A549 (cell line): ENCODE measurements at regions of chr9 and their contacts with region 1.

Region 1: DNA sequence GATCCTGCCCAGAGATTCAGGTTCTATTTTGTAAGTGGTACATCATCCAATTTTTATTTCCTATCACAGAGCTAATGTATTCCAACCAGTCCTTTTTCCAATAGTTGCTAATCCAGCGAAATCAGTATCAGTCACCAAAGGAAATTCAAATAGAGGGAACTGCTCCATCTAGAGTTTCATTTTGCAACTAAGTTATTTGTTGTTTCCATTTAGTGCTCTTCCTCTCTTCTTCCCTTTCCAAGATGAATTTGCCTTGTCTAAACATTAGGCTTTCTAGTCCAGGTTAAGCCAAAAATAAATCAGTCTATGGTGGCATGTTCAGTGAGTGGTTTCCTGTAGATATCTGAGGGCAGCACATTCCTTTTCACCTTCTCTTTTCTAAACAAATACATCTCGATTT is 79.8 kb upstream of the SPATA31D4 start:
- DNase-seq: no peak
- ATAC-seq: peak; percentile 51 to 74; a peak in 4 of 6 replicates
- H3K4me3 ChIP-seq: no peak overlapping the region
- H3K27ac ChIP-seq: peak overlapping the region in 1 of 2 experiments; percentile 42; a peak in 1 of 6 replicates
- H3K4me1 ChIP-seq: peaks cover 20% of the 10 kb centered on the region
- CTCF ChIP-seq: peak; percentile 69
- EP300 ChIP-seq: no peak
- POLR2A ChIP-seq: no peak
- RAD21 ChIP-seq: peak; percentile 68 to 74

Region 2: DNA sequence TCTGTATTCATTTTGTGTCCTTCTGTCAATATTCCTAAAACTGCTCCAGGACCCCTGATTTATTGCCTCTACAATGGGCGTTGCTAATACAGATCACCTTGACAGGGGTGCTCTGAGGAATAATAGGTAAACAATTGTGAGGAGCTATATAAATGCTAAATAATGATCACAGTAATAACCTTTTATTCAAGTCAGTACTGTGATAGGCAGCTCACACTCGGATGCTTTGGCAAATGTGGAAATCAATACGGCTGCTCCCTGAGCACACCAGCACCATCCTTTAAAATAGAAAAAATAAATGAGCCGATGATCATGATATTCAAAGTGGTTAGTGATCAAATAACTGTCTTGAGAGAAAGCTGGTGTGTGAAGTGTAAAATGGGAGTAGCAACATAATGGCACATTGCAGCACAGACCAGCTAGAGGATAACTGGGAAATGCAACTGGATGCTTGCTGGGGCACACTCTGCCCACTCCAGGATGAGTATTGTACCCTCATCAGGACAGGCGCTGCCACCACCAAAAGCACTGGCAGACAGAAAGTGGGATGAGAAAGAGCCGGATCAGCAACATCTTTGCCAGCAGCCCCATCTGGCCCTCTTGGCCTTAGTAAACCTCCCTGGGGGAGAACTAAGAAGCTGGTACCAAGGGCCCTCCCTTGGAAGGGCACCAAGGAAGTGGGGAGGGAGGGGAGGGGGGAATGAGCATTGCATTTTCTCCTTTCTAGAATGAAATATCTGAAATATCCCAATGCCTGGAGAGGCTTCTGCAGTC is 10.4 kb after region 1 on chr9:
- CTCF ChIA-PET with region 1: interaction called, 22 read pairs
- POLR2A ChIA-PET with region 1: no interaction called
- DNase-seq: no peak
- ATAC-seq: no peak
- H3K4me3 ChIP-seq: no peak overlapping the region
- H3K27ac ChIP-seq: peak overlapping the region in 1 of 2 experiments; percentile 27; a peak in 1 of 6 replicates
- H3K4me1 ChIP-seq: peaks cover 19% of the 10 kb centered on the region
- CTCF ChIP-seq: no peak
- EP300 ChIP-seq: no peak
- POLR2A ChIP-seq: no peak
- RAD21 ChIP-seq: no peak